Activated CD8-positive, alpha-beta T cell treated with anti-CD3 and anti-CD28 coated beads, Interleukin-2, amount 10 ng/mL, durations not matched to agents 7 days and 5 days (primary cell): ENCODE measurements at regions of chr12 and their contacts with region 1.

Region 1: GRCh38 chr12:1939801-1940607 is 21.6 kb upstream of the CACNA2D4 start:
- DNase-seq: peak; percentile 91
- ATAC-seq: peak; percentile 98
- H3K4me3 Mint-ChIP-seq: no peak overlapping the region
- H3K27ac Mint-ChIP-seq: no peak overlapping the region
- H3K4me1 Mint-ChIP-seq: peaks cover 4% of the 10 kb centered on the region
- H3K27me3 Mint-ChIP-seq: no peaks in the 10 kb centered on the region

Region 2: GRCh38 chr12:1634590-1635191 is 305.3 kb before region 1 on chr12:
- CTCF ChIA-PET with region 1: interaction called, 28 read pairs
- POLR2A ChIA-PET with region 1: no interaction called
- DNase-seq: peak; percentile 72
- ATAC-seq: peak; percentile 68
- H3K4me3 Mint-ChIP-seq: no peak overlapping the region
- H3K27ac Mint-ChIP-seq: no peak overlapping the region
- H3K4me1 Mint-ChIP-seq: peaks cover 8% of the 10 kb centered on the region
- H3K27me3 Mint-ChIP-seq: peaks cover 52% of the 10 kb centered on the region

Region 3: GRCh38 chr12:1661553-1662335 is 278.3 kb before region 1 on chr12:
- CTCF ChIA-PET with region 1: interaction called, 47 read pairs
- POLR2A ChIA-PET with region 1: no interaction called
- DNase-seq: peak; percentile 92
- ATAC-seq: peak; percentile 92
- H3K4me3 Mint-ChIP-seq: peak overlapping the region; percentile 63
- H3K27ac Mint-ChIP-seq: peak overlapping the region; percentile 88
- H3K4me1 Mint-ChIP-seq: peaks cover 44% of the 10 kb centered on the region
- H3K27me3 Mint-ChIP-seq: no peaks in the 10 kb centered on the region

Region 4: GRCh38 chr12:1812650-1813302 is 127.2 kb before region 1 on chr12:
- CTCF ChIA-PET with region 1: interaction called, 12 read pairs
- POLR2A ChIA-PET with region 1: no interaction called
- DNase-seq: no peak
- ATAC-seq: no peak
- H3K4me3 Mint-ChIP-seq: no peak overlapping the region
- H3K27ac Mint-ChIP-seq: no peak overlapping the region
- H3K4me1 Mint-ChIP-seq: peaks cover 9% of the 10 kb centered on the region
- H3K27me3 Mint-ChIP-seq: peaks cover 4% of the 10 kb centered on the region

Region 5: DNA sequence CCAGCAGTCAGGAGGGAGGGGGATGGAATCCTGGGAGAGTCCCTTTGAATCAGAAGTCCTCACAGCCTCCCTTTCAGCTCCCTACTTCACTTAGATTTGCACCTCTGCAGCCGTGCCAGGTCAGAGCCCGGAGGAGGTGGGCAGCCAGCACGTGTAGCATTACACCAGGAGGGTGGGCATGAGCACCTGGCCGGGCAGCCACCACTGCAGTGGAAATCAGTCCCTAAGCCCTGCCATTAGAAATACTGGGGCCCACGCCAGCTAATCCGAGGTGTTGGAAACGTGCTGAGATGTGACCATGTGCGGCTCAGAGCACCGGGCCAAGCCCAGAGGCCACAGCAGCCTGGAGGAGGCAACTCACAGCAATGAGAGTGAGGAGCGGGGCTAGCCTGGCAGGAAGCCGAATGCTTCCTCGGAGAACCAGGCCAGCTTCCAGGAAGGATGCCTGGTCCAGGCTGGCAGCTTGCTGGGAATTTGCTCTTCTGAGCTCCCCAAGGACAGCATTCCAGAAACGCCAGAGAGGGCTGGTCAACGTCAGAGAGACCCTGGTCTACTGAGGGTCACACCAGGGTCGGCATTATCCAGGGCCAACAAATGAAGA is 12.2 kb before region 1 on chr12:
- CTCF ChIA-PET with region 1: interaction called, 10 read pairs
- POLR2A ChIA-PET with region 1: no interaction called
- DNase-seq: no peak
- ATAC-seq: no peak
- H3K4me3 Mint-ChIP-seq: no peak overlapping the region
- H3K27ac Mint-ChIP-seq: no peak overlapping the region
- H3K4me1 Mint-ChIP-seq: peaks cover 29% of the 10 kb centered on the region
- H3K27me3 Mint-ChIP-seq: peaks cover under 1% of the 10 kb centered on the region

Region 6: GRCh38 chr12:1970331-1970900 is 30.4 kb after region 1 on chr12:
- CTCF ChIA-PET with region 1: interaction called, 12 read pairs
- POLR2A ChIA-PET with region 1: no interaction called
- DNase-seq: no peak
- ATAC-seq: no peak
- H3K4me3 Mint-ChIP-seq: no peak overlapping the region
- H3K27ac Mint-ChIP-seq: no peak overlapping the region
- H3K4me1 Mint-ChIP-seq: no peaks in the 10 kb centered on the region
- H3K27me3 Mint-ChIP-seq: no peaks in the 10 kb centered on the region

Region 7: DNA sequence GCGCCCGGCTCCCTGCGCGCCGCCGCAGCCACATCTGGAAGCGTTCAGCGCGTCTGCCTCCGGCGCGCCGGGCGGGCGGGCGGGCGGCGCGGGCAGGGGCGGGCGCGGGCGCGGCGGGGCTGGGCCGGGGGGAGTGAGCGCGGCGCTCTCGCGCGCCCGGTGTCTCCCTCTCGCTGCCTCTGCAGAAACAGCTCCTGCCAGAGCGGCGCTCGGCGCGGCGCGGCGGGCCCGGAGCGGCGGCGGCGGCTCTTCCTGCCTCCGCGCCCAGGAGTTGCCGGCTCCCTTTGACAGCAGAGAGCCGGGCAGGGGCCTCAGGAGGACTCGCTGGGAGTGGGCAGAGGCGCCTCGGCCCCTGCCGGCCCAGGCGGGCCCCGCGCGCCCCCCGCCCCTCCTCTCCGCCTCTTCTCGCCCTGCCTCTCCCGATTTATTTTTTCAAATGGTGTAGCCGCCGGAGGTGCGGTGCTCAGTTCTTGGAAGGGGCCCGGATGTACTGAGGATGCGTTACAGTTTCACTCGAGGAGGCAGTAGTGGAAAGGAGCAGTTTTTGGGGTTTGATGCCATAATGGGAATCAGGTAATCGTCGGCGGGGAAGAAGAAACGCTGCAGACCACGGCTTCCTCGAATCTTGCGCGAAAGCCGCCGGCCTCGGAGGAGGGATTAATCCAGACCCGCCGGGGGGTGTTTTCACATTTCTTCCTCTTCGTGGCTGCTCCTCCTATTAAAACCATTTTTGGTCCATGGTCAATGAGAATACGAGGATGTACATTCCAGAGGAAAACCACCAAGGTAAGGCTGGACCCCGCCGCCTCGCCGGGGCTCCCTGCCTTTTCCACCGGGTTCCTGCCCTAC is 113.0 kb after region 1 on chr12 and contains the start of gene CACNA1C:
- CTCF ChIA-PET with region 1: no interaction called
- POLR2A ChIA-PET with region 1: no interaction called
- DNase-seq: peak; percentile 57
- ATAC-seq: peak; percentile 87
- H3K4me3 Mint-ChIP-seq: peak within 1 kb of the TSS; percentile 73
- H3K27ac Mint-ChIP-seq: peak within 1 kb of the TSS; percentile 42
- H3K4me1 Mint-ChIP-seq: peaks cover 19% of the 10 kb centered on the region
- H3K27me3 Mint-ChIP-seq: peaks cover 80% of the 10 kb centered on the region
- total RNA-seq, gene CACNA1C: 0.08 TPM